Calu3 (cell line): ENCODE measurements at regions of chrX and their contacts with region 1.

Region 1: DNA sequence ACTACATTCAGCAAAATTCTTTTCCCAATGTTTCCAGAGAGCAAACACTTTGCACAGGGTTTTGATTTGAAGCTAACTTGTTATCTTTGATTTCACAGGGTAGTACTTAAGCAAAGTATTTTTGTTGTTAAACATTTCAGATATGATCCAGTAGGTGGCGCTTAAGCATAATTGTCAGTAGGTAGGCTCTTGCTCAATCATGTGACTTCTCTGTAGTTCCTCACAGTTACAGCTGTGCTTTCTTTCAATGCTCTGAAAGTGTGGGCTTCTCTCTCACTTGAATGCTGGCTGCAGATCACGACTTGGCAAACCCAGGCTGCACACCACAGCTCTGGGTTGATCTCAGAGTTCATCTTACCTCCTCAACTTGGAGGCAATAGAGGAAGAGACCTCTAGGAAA is 1016.5 kb downstream of the SH3BGRL start:
- DNase-seq: no peak
- H3K4me3 Mint-ChIP-seq: no peak overlapping the region
- H3K27ac Mint-ChIP-seq: no peak overlapping the region
- H3K4me1 Mint-ChIP-seq: no peaks in the 10 kb centered on the region
- H3K27me3 Mint-ChIP-seq: no peaks in the 10 kb centered on the region
- CTCF ChIP-seq: peak; percentile 28

Region 2: GRCh38 chrX:81957900-81958545 is 260.3 kb before region 1 on chrX:
- CTCF ChIA-PET with region 1: no interaction called
- intact Hi-C with region 1: loop called (anchors 10 kb)
- DNase-seq: peak; percentile 23
- H3K4me3 Mint-ChIP-seq: no peak overlapping the region
- H3K27ac Mint-ChIP-seq: no peak overlapping the region
- H3K4me1 Mint-ChIP-seq: no peaks in the 10 kb centered on the region
- H3K27me3 Mint-ChIP-seq: no peaks in the 10 kb centered on the region
- CTCF ChIP-seq: no peak

Region 3: GRCh38 chrX:82196866-82197265 is 21.5 kb before region 1 on chrX:
- CTCF ChIA-PET with region 1: no interaction called
- intact Hi-C with region 1: no loop called
- DNase-seq: no peak
- H3K4me3 Mint-ChIP-seq: no peak overlapping the region
- H3K27ac Mint-ChIP-seq: no peak overlapping the region
- H3K4me1 Mint-ChIP-seq: no peaks in the 10 kb centered on the region
- H3K27me3 Mint-ChIP-seq: no peaks in the 10 kb centered on the region
- CTCF ChIP-seq: no peak

Region 4: DNA sequence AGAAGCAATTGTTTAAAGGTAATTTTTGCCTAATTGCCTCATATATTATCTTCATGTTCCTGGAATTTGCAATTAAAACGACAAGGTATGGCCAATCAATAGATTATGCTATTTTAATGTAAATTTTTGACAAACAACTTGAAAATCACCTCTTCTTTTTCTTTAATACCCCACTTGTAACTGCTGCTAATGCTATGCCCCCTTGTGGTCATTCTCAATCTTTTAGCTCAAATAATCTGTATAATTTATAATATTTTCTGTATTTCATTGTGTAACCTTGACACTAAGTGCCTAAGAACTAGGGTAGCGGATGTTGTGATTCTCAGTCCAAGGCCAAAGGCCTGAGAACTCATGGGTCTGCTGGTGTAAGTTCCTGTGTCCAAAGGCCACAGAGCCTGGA is 458.0 kb after region 1 on chrX:
- CTCF ChIA-PET with region 1: interaction called, 10 read pairs
- intact Hi-C with region 1: loop called (anchors 2 kb)
- DNase-seq: no peak
- H3K4me3 Mint-ChIP-seq: no peak overlapping the region
- H3K27ac Mint-ChIP-seq: no peak overlapping the region
- H3K4me1 Mint-ChIP-seq: no peaks in the 10 kb centered on the region
- H3K27me3 Mint-ChIP-seq: no peaks in the 10 kb centered on the region
- CTCF ChIP-seq: no peak

Region 5: GRCh38 chrX:83535417-83536196 is 1317.2 kb after region 1 on chrX:
- CTCF ChIA-PET with region 1: no interaction called
- intact Hi-C with region 1: loop called (anchors 10 kb)
- DNase-seq: no peak
- H3K4me3 Mint-ChIP-seq: peak overlapping the region; percentile 50
- H3K27ac Mint-ChIP-seq: no peak overlapping the region
- H3K4me1 Mint-ChIP-seq: no peaks in the 10 kb centered on the region
- H3K27me3 Mint-ChIP-seq: no peaks in the 10 kb centered on the region
- CTCF ChIP-seq: no peak